ENCODE measurements at regions of chr15 and their contacts with region 1.

Region 1: DNA sequence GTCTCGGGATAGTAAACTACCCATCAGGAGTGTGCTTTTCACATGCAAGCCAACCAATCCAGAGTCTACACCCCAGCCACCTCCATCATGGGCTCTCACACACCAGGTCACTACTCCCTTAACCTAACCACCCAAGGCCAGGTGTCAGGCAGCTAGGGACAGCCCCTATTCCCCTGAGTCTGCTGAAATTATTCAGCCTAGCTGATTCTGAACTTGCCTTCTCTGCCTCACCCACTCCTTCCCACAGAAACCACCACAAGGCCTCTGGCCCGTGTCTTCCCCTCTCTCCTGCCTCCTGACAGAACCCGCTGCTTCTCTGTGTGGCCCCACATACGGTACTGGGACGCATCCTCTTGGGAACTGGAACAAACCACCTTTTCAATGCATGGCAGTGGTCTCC is 82.1 kb downstream of the PCSK6 start:
- DNase-seq: peak; percentile 63
- ATAC-seq: peak; percentile 98
- H3K4me3 Mint-ChIP-seq: no peak overlapping the region
- H3K27ac Mint-ChIP-seq: no peak overlapping the region
- H3K4me1 Mint-ChIP-seq: peaks cover 8% of the 10 kb centered on the region
- H3K27me3 Mint-ChIP-seq: peaks cover 6% of the 10 kb centered on the region
- CTCF ChIP-seq: no peak

Region 2: DNA sequence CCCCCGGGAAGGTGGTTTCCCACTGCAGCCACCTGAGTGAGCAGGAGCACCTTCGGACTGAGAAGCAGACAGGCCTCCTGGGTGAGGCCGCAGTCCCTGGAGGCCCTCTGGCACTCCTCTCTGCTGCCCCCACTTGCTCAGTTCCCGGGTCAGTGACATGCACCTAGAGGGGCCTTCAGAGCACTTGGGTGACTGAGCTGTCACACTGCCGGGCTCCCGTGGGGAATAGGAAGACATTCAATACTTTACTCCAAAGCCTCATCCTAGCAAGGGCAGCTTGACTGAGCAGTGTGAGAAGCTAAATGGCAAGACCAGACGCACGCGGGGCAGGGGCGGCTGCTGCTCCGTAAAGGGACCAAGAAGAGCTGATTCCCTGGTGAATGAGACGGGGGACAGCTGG is 19.4 kb after region 1 on chr15:
- CTCF ChIA-PET with region 1: no interaction called
- POLR2A ChIA-PET with region 1: no interaction called
- intact Hi-C with region 1: no loop called
- DNase-seq: no peak
- ATAC-seq: no peak
- H3K4me3 Mint-ChIP-seq: no peak overlapping the region
- H3K27ac Mint-ChIP-seq: no peak overlapping the region
- H3K4me1 Mint-ChIP-seq: no peaks in the 10 kb centered on the region
- H3K27me3 Mint-ChIP-seq: no peaks in the 10 kb centered on the region
- CTCF ChIP-seq: no peak

Region 3: GRCh38 chr15:101469520-101470288 is 62.3 kb after region 1 on chr15:
- CTCF ChIA-PET with region 1: no interaction called
- POLR2A ChIA-PET with region 1: no interaction called
- intact Hi-C with region 1: loop called (anchors 10 kb)
- DNase-seq: no peak
- ATAC-seq: no peak
- H3K4me3 Mint-ChIP-seq: no peak overlapping the region
- H3K27ac Mint-ChIP-seq: no peak overlapping the region
- H3K4me1 Mint-ChIP-seq: no peaks in the 10 kb centered on the region
- H3K27me3 Mint-ChIP-seq: peaks cover 11% of the 10 kb centered on the region
- CTCF ChIP-seq: no peak